Activated CD4-positive, alpha-beta T cell treated with anti-CD3 and anti-CD28 coated beads, Interleukin-2, amount 10 ng/mL, durations not matched to agents 24 days and 14 days (primary cell): ENCODE measurements at regions of chrX and their contacts with region 1.

Region 1: GRCh38 chrX:15737960-15738902 is at the start of gene CA5B:
- DNase-seq: peak; percentile 99
- H3K4me3 Mint-ChIP-seq: peak within 1 kb of the TSS; percentile 90
- H3K27ac Mint-ChIP-seq: peak within 1 kb of the TSS; percentile 76
- H3K4me1 Mint-ChIP-seq: peaks cover 21% of the 10 kb centered on the region
- H3K27me3 Mint-ChIP-seq: no peaks in the 10 kb centered on the region
- total RNA-seq, gene CA5B: 4.7 and 5.9 TPM in 2 replicates

Region 2: GRCh38 chrX:15749642-15750610 is 11.7 kb after region 1 on chrX:
- intact Hi-C with region 1: loop called (anchors 1 kb)
- DNase-seq: peak; percentile 76
- H3K4me3 Mint-ChIP-seq: peak overlapping the region; percentile 76
- H3K27ac Mint-ChIP-seq: peak overlapping the region; percentile 92
- H3K4me1 Mint-ChIP-seq: peaks cover 36% of the 10 kb centered on the region
- H3K27me3 Mint-ChIP-seq: no peaks in the 10 kb centered on the region